Ovary (tissue), 10 donors: ENCODE measurements at regions of chr21 and their contacts with region 1.

Region 1: GRCh38 chr21:44639331-44639655 is 2.1 kb downstream of the KRTAP10-10 start:
- DNase-seq: no peak
- H3K4me3 ChIP-seq: no peak overlapping the region
- H3K27ac ChIP-seq: no peak overlapping the region
- H3K4me1 ChIP-seq: no peaks in the 10 kb centered on the region
- H3K27me3 ChIP-seq: no peaks in the 10 kb centered on the region
- CTCF ChIP-seq: no peak
- EP300 ChIP-seq: no peak
- POLR2A ChIP-seq: no peak

Region 2: GRCh38 chr21:44589586-44590313 is 49.5 kb before region 1 on chr21:
- intact Hi-C with region 1: loop called in 1 of 4 experiments (anchors 2 kb)
- DNase-seq: no peak
- H3K4me3 ChIP-seq: no peak overlapping the region
- H3K27ac ChIP-seq: no peak overlapping the region
- H3K4me1 ChIP-seq: no peaks in the 10 kb centered on the region
- H3K27me3 ChIP-seq: no peaks in the 10 kb centered on the region
- CTCF ChIP-seq: no peak
- EP300 ChIP-seq: no peak
- POLR2A ChIP-seq: no peak

Region 3: DNA sequence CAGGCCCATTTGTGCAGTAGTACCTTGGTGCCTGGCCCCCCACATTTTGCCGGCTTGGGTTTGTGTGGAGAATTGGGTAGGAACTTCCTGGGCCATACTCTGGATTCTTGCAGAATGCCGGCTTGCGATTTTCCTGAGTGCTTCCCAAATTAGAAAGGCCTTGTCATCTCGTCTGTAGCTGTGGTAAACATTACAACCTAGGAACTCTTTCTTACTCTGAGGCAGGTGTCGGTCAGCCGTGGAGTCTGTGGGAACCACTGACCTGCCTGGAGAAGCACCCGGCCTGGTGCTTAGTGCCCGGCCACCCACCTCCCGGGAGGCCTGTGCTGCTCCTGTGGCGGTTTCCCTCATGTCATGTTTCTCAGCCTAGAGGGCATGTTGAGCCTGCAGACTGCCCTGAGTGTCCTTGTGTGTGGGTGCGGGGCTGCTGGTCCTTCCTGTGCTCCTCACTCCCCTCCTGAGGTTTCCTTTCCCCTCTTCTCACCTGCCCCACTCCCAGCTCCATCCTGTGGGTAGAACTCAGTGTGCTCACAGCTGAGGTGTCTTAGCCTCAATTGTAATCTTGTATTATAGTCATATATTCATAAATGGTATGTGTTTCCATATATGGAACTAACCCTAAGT is 1900.9 kb after region 1 on chr21:
- intact Hi-C with region 1: no loop called
- DNase-seq: no peak
- H3K4me3 ChIP-seq: no peak overlapping the region
- H3K27ac ChIP-seq: no peak overlapping the region
- H3K4me1 ChIP-seq: no peaks in the 10 kb centered on the region
- H3K27me3 ChIP-seq: no peaks in the 10 kb centered on the region
- CTCF ChIP-seq: no peak
- EP300 ChIP-seq: no peak
- POLR2A ChIP-seq: no peak